ENCODE measurements at regions of chr17 and their contacts with region 1.

Region 1: DNA sequence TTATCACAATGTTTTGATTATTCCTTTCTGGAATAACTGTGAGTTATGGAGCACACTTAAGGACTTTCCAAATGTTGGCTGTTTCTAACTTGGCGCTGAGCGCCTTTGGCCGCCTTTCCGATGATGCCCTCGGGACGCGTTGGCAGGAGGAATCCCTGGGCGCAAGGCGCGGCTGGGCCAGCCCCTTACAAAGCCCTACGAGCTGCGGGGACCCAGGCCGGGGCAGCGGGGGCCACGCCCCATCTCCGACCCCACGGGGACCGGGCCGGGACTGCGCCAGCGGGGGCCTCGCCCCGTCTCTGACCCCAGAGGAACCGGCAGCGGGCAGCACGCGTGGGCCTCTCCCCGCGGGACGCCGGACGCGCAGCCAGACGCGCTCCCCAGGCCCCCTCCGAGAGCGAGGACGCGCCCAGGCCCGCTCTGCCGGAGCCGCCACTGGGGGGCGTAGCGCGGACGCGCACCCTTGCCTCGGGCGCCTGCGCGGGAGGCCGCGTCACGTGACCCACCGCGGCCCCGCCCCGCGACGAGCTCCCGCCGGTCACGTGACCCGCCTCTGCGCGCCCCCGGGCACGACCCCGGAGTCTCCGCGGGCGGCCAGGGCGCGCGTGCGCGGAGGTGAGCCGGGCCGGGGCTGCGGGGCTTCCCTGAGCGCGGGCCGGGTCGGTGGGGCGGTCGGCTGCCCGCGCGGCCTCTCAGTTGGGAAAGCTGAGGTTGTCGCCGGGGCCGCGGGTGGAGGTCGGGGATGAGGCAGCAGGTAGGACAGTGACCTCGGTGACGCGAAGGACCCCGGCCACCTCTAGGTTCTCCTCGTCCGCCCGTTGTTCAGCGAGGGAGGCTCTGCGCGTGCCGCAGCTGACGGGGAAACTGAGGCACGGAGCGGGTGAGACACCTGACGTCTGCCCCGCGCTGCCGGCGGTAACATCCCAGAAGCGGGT is at the start of gene GAA:
- DNase-seq: peak; percentile 65
- H3K4me3 ChIP-seq: peak within 1 kb of the TSS; percentile 50 to 98 (median 86)
- H3K27ac ChIP-seq: peak within 1 kb of the TSS; percentile 51
- H3K4me1 ChIP-seq: peaks cover 32% of the 10 kb centered on the region
- H3K27me3 ChIP-seq: no peaks in the 10 kb centered on the region
- CTCF ChIP-seq: peak; percentile 52 to 64
- total RNA-seq, gene GAA: 32.2 to 230 TPM

Region 2: GRCh38 chr17:79644617-79645016 is 456.7 kb before region 1 on chr17:
- CTCF ChIA-PET with region 1: no interaction called
- dilution Hi-C with region 1: no loop called
- in situ Hi-C with region 1: no loop called
- intact Hi-C with region 1: no loop called
- DNase-seq: no peak
- H3K4me3 ChIP-seq: no peak overlapping the region
- H3K27ac ChIP-seq: no peak overlapping the region
- H3K4me1 ChIP-seq: no peaks in the 10 kb centered on the region
- H3K27me3 ChIP-seq: no peaks in the 10 kb centered on the region
- CTCF ChIP-seq: no peak

Region 3: DNA sequence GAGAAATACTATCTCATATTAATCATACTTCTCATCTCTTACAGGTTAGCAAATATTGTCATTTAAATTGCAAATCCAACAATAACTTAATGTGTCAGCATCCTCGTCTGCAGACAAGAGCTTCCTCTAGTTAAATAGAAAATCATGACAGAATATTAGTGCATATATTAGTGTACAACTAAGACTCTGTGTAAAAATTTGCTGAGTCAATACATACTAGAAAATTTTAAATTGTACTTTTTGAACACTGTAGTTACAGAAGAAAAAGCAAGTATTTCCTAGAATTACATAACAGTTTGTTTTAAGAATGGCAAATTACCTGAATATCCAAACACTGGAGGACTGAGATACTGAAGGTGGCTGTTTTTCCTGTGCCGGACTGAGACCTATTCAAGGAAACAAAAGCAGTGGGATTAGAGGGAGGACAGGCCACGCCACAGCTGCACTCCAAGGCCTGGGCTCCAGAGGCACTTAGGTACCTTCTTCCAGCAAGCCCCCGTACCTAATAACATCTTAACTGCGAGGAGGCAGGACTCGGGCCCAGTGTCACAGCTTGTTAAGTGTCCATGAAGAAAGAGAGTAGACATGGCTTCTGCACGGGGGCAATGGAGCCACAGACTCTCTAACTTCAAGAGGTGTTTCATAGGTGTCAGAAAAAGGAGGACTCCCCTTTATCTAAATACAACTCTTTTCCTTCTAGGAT is 40.3 kb after region 1 on chr17:
- CTCF ChIA-PET with region 1: interaction called, 3 read pairs
- dilution Hi-C with region 1: loop called (anchors 5 kb)
- in situ Hi-C with region 1: no loop called
- intact Hi-C with region 1: loop called (anchors 1 kb)
- DNase-seq: no peak
- H3K4me3 ChIP-seq: no peak overlapping the region
- H3K27ac ChIP-seq: no peak overlapping the region
- H3K4me1 ChIP-seq: peaks cover 10% of the 10 kb centered on the region
- H3K27me3 ChIP-seq: no peaks in the 10 kb centered on the region
- CTCF ChIP-seq: no peak

Region 4: GRCh38 chr17:80187515-80187941 is 86.2 kb after region 1 on chr17:
- CTCF ChIA-PET with region 1: no interaction called
- dilution Hi-C with region 1: no loop called
- in situ Hi-C with region 1: no loop called
- intact Hi-C with region 1: loop called (anchors 10 kb)
- DNase-seq: peak; percentile 45
- H3K4me3 ChIP-seq: no peak overlapping the region
- H3K27ac ChIP-seq: no peak overlapping the region
- H3K4me1 ChIP-seq: peaks cover 22% of the 10 kb centered on the region
- H3K27me3 ChIP-seq: no peaks in the 10 kb centered on the region
- CTCF ChIP-seq: no peak

Region 5: GRCh38 chr17:80254396-80255251 is 153.3 kb after region 1 on chr17:
- CTCF ChIA-PET with region 1: no interaction called
- dilution Hi-C with region 1: no loop called
- in situ Hi-C with region 1: no loop called
- intact Hi-C with region 1: loop called (anchors 2 kb)
- DNase-seq: peak; percentile 87
- H3K4me3 ChIP-seq: no peak overlapping the region
- H3K27ac ChIP-seq: peak overlapping the region; percentile 66
- H3K4me1 ChIP-seq: peaks cover 23% of the 10 kb centered on the region
- H3K27me3 ChIP-seq: no peaks in the 10 kb centered on the region
- CTCF ChIP-seq: no peak

Measured in mammary epithelial cell (primary cell).